ENCODE measurements at regions of chr1 and their contacts with region 1.

Region 1: DNA sequence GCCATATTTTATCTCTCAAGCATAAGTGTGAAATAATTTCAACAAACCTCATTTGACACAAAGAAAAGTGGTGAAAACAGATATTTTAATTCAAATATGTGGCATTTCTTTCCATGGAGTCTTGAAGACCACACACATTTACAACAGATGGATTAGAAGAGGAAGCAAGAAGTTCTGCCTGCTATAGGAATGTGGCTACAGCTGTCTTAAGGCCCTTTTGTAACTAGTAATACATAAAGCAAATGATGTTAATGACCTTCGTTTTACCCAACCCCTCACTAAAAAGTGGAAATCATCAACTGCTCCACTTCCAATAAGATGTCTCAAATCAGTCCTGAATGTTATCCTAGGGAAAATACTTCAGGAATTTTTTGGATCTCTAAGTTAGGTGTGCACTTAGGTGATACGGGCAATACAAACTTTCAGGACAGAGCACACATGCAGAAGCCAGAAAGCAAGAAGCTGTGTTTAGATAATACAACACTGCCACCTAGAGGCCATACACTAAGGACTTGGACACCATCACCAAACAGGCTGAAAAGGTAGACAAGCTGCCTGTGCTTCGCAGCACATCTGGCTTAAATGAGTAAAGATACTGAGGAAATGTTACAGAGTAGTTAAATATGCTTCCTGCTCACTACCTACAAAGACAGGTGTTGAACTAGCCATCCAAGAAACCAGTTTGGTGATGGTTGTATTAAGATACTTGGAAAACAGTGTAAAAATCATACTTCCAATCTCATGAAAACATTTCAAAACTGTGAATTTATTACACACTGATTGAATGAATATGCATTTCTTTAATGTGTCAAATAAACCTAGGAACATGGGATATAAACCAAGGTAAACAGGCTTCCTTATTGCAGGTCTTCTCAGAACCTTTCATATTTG is 24.4 kb downstream of the RRAGC start:
- DNase-seq: peak; percentile 87
- H3K4me3 ChIP-seq: no peak overlapping the region
- H3K27ac ChIP-seq: no peak overlapping the region
- H3K4me1 ChIP-seq: no peaks in the 10 kb centered on the region
- CTCF ChIP-seq: peak; percentile 91

Region 2: GRCh38 chr1:38029685-38030511 is 805.3 kb before region 1 on chr1:
- CTCF ChIA-PET with region 1: no interaction called
- POLR2A ChIA-PET with region 1: no interaction called
- intact Hi-C with region 1: loop called (anchors 10 kb)
- DNase-seq: peak; percentile 25
- H3K4me3 ChIP-seq: no peak overlapping the region
- H3K27ac ChIP-seq: no peak overlapping the region
- H3K4me1 ChIP-seq: peaks cover 14% of the 10 kb centered on the region
- CTCF ChIP-seq: no peak

Region 3: DNA sequence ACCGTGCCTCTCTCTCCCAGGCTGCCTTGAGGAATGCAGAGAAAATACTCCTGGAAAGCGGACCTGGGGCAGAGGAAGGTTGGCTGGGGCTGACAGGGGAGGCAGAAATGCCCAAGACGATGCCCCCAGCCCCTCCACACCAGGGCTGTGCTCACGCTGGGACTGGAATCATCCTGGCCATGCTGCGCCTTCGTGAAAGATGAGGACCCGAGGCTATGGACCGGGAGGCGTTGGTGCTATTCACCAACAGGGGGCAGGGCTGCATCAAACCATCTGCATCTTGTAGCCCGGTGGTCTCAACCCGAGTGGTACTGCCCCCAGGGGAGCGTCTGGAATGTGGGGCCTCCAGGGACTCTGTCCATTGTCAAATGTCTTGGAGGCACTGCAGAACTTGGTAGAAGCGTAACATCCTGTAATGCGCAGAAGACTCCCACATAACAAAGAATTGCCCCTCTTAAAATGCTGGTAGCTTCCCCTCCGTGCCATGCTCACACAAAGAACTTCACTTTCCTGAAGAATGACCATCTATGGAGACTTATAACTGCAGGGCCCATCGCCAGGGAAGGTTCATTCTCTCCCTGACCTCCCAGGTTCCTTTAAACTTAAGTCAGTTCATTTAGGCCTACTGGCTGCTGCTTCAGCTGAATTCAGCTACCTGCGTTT is 226.8 kb before region 1 on chr1:
- CTCF ChIA-PET with region 1: no interaction called
- POLR2A ChIA-PET with region 1: no interaction called
- intact Hi-C with region 1: loop called (anchors 5 kb)
- DNase-seq: peak; percentile 34
- H3K4me3 ChIP-seq: no peak overlapping the region
- H3K27ac ChIP-seq: no peak overlapping the region
- H3K4me1 ChIP-seq: no peaks in the 10 kb centered on the region
- CTCF ChIP-seq: peak; percentile 71

Region 4: DNA sequence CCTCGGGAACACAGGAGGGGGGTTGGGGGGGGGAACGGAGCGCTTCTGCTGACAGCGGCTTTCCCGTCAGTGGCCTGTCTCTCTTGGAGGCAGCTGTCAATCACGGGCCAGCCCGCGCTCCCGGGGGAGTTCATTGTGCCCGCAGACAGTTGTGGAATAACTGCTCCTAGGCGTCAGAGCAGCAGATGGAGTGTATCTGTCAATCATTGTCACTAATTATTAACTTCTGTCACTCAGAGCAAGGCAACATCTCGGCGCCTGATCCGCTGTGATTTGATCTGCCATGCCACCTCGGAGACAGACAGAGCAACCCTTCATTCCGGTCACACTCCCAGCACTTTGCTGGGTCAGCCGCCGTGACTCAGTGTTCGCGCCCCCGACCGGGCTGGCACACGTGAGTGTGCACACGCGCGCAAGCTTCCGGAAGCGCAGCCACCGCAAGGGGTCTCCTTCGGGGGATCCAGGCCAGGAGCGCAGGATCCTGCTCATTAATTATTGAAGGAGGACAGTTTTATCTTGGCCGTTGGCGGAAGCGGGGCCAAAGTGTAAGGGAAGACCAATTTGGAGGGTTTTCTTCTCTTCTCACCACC is 51.4 kb before region 1 on chr1:
- CTCF ChIA-PET with region 1: no interaction called
- POLR2A ChIA-PET with region 1: no interaction called
- intact Hi-C with region 1: no loop called
- DNase-seq: no peak
- H3K4me3 ChIP-seq: no peak overlapping the region
- H3K27ac ChIP-seq: no peak overlapping the region
- H3K4me1 ChIP-seq: no peaks in the 10 kb centered on the region
- CTCF ChIP-seq: no peak